Endothelial cell of umbilical vein (primary cell): ENCODE measurements at regions of chr10 and their contacts with region 1.

Region 1: GRCh38 chr10:118046395-118047156 is at the start of gene RAB11FIP2:
- DNase-seq: peak; percentile 86
- H3K4me3 ChIP-seq: peak within 1 kb of the TSS; percentile 49 to 88 (median 79)
- H3K27ac ChIP-seq: peak within 1 kb of the TSS; percentile 47
- H3K4me1 ChIP-seq: peaks cover 31% of the 10 kb centered on the region
- H3K27me3 ChIP-seq: no peaks in the 10 kb centered on the region
- CTCF ChIP-seq: peak in 1 of 2 donors; percentile 11
- POLR2A ChIP-seq: peak; percentile 34
- total RNA-seq, gene RAB11FIP2: 8.6 and 12.6 TPM in 2 replicates

Region 2: DNA sequence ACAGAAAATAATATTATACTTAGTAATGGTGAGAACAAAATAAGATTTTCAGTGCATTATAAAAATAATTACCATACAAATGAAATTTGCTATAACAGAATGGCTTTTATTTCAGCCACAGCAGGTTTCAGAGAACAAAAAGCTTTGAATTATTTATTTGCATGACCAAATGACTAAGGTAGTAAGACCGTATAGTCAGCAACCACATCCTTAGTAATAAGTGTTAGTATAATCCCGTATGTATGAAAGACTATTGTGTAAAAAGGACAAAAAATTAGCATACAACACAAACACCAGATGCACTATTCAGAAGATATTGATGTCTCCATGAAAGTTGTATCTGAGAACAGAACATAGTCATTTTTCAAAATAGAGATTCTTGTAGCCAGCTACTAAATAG is 683.5 kb before region 1 on chr10:
- CTCF ChIA-PET with region 1: no interaction called
- POLR2A ChIA-PET with region 1: no interaction called
- dilution Hi-C with region 1: no loop called
- intact Hi-C with region 1: loop called (anchors 5 kb)
- DNase-seq: no peak
- H3K4me3 ChIP-seq: no peak overlapping the region
- H3K27ac ChIP-seq: no peak overlapping the region
- H3K4me1 ChIP-seq: peaks cover 37% of the 10 kb centered on the region
- H3K27me3 ChIP-seq: no peaks in the 10 kb centered on the region
- CTCF ChIP-seq: no peak
- POLR2A ChIP-seq: no peak

Region 3: DNA sequence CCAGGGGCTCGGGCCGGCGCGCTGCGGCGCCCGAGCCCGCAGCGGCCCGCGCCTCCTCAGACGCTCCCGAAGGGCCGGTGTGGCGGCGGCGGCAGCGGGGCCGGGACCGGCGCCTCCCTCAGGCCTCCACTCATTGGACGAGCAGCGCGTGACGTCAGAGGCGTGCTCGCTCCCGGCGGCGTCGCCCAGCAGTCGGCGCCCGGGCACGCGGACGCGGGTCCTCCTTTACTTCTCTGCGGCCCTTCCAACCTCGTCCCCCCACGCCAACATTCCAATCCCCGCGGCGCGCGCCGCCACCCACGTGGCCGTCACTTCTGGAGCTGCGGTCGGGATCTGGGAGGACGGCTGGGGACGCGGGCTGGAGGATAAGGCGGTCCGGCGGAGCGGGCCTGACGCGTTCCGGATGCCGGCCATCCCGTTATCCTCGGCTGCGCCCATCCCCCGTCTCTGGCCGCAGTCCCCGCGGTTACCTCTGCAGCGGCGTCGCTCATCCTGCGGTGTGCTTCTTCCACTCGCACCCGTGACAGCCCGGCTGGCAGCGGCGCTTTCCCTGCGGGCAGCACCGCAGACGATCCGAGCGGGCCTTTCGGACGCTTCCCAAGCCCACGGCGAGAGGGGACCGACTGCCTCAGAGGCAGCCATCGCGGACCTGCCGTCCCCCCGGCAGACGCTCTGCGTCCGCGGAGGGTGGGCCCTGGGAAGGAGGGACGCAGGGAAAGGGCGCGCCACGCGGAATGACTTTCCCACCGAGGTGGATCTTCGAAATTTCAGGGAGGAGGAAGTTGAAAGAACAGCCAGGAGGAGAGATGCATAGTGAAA is 671.0 kb before region 1 on chr10 and contains the start of gene PDZD8:
- CTCF ChIA-PET with region 1: no interaction called
- POLR2A ChIA-PET with region 1: no interaction called
- dilution Hi-C with region 1: no loop called
- intact Hi-C with region 1: loop called (anchors 1 kb)
- DNase-seq: peak; percentile 92
- H3K4me3 ChIP-seq: peak within 1 kb of the TSS; percentile 47 to 88 (median 84)
- H3K27ac ChIP-seq: peak within 1 kb of the TSS; percentile 83
- H3K4me1 ChIP-seq: peaks cover 21% of the 10 kb centered on the region
- H3K27me3 ChIP-seq: peaks cover 22 to 29% of the 10 kb centered on the region in 2 experiments
- CTCF ChIP-seq: no peak
- POLR2A ChIP-seq: peak; percentile 87
- total RNA-seq, gene PDZD8: 21.9 and 22.6 TPM in 2 replicates

Region 4: GRCh38 chr10:117461766-117462423 is 584.7 kb before region 1 on chr10:
- CTCF ChIA-PET with region 1: no interaction called
- POLR2A ChIA-PET with region 1: no interaction called
- dilution Hi-C with region 1: no loop called
- intact Hi-C with region 1: loop called (anchors 5 kb)
- DNase-seq: peak; percentile 95
- H3K4me3 ChIP-seq: no peak overlapping the region
- H3K27ac ChIP-seq: peak overlapping the region; percentile 89
- H3K4me1 ChIP-seq: peaks cover 38% of the 10 kb centered on the region
- H3K27me3 ChIP-seq: no peaks in the 10 kb centered on the region
- CTCF ChIP-seq: no peak
- POLR2A ChIP-seq: no peak

Region 5: GRCh38 chr10:117543245-117544003 is 503.2 kb before region 1 on chr10:
- CTCF ChIA-PET with region 1: no interaction called
- POLR2A ChIA-PET with region 1: no interaction called
- dilution Hi-C with region 1: no loop called
- intact Hi-C with region 1: loop called (anchors 2 kb)
- DNase-seq: no peak
- H3K4me3 ChIP-seq: no peak overlapping the region
- H3K27ac ChIP-seq: no peak overlapping the region
- H3K4me1 ChIP-seq: peaks cover 2% of the 10 kb centered on the region
- H3K27me3 ChIP-seq: peaks cover 90 to 97% of the 10 kb centered on the region in 2 experiments
- CTCF ChIP-seq: peak in 1 of 2 donors; percentile 23
- POLR2A ChIP-seq: no peak

Region 6: GRCh38 chr10:118012952-118013525 is 33.5 kb before region 1 on chr10:
- CTCF ChIA-PET with region 1: interaction called, 4 read pairs
- POLR2A ChIA-PET with region 1: no interaction called
- dilution Hi-C with region 1: no loop called
- intact Hi-C with region 1: loop called (anchors 5 kb)
- DNase-seq: no peak
- H3K4me3 ChIP-seq: no peak overlapping the region
- H3K27ac ChIP-seq: no peak overlapping the region
- H3K4me1 ChIP-seq: no peaks in the 10 kb centered on the region
- H3K27me3 ChIP-seq: no peaks in the 10 kb centered on the region
- CTCF ChIP-seq: no peak
- POLR2A ChIP-seq: no peak

Region 7: DNA sequence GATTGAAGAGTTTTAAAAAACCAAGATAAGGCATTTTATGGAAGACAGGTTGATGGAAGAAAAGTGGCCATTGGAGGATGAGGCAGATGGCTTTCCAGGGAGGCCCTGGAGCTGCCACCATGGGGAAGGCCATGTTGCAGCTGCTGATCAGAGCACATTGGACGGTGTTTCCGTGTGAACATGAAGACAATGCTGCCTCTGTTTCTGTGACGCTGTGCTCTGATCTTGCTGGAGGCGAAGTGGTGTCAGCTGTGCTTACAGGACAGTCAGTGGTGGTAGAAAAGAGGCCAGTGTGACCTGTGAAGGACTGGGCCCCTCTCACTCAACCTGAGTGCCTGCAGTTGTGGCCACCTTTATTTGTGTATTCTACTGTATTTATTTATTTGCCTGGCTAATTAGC is 162.6 kb after region 1 on chr10:
- CTCF ChIA-PET with region 1: no interaction called
- POLR2A ChIA-PET with region 1: no interaction called
- dilution Hi-C with region 1: no loop called
- intact Hi-C with region 1: no loop called
- DNase-seq: no peak
- H3K4me3 ChIP-seq: no peak overlapping the region
- H3K27ac ChIP-seq: no peak overlapping the region
- H3K4me1 ChIP-seq: no peaks in the 10 kb centered on the region
- H3K27me3 ChIP-seq: no peaks in the 10 kb centered on the region
- CTCF ChIP-seq: no peak
- POLR2A ChIP-seq: no peak

Region 8: GRCh38 chr10:118341791-118342637 is 295.4 kb after region 1 on chr10 and contains the start of gene FAM204A:
- CTCF ChIA-PET with region 1: no interaction called
- POLR2A ChIA-PET with region 1: no interaction called
- dilution Hi-C with region 1: no loop called
- intact Hi-C with region 1: loop called (anchors 5 kb)
- DNase-seq: peak; percentile 96
- H3K4me3 ChIP-seq: peak within 1 kb of the TSS; percentile 72 to 95 (median 91)
- H3K27ac ChIP-seq: peak within 1 kb of the TSS; percentile 11
- H3K4me1 ChIP-seq: peaks cover 13% of the 10 kb centered on the region
- H3K27me3 ChIP-seq: peaks cover 0 to 2% of the 10 kb centered on the region in 2 experiments
- CTCF ChIP-seq: no peak
- POLR2A ChIP-seq: peak; percentile 84
- total RNA-seq, gene FAM204A: 68.7 and 73.7 TPM in 2 replicates